Dorsolateral prefrontal cortex (tissue), 120 donors: ENCODE measurements at regions of chr1 and their contacts with region 1.

Region 1: GRCh38 chr1:211133836-211134669 is at the start of gene KCNH1:
- DNase-seq: peak; percentile 86 to 94 (median 91)
- H3K4me3 ChIP-seq: peak within 1 kb of the TSS; percentile 57 to 86 (median 72)
- H3K27ac ChIP-seq: peak within 1 kb of the TSS; percentile 66 to 96 (median 89)
- H3K27me3 ChIP-seq: peaks cover 0 to 3% (median 0%) of the 10 kb centered on the region in 45 donors
- CTCF ChIP-seq: peak; percentile 81 to 100 (median 99)
- total RNA-seq, gene KCNH1: 30.0 to 110 (median 71.5) TPM

Region 2: DNA sequence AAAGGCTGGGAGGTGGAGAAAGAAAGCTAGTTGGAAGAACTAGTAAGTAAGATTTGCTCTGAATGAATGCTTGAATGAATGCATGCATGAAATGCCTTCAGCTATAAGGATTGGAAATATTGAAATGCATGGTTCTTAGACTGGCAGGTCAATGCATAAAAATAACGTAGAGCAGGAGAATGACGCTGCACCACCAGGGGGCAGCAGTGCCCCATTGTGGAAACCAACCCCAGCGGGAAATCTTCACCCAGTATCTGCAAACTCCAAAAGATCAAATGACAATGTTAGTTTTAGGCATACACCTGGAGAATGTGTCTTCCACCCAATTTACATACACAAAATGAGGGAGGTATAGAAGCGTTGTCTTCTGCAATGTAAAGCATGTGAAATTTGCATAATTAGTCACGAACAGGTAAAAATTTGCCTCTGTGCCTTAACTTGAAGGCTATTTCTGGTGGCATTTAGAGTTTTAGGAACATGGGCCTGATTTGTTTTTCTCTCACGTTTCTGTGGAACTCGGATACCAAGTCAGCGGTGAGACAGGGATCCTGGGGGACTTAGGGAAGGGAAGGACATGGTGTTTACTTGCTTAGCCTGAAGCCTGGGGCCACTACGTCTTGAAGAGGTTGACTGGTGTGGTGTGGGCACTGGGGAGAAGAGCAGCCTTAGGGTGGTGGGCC is 726.7 kb before region 1 on chr1:
- intact Hi-C with region 1: loop called (anchors 1 kb)
- DNase-seq: peak; percentile 70 to 90 (median 84)
- H3K4me3 ChIP-seq: no peak overlapping the region
- H3K27ac ChIP-seq: no peak overlapping the region
- H3K27me3 ChIP-seq: no peaks in the 10 kb centered on the region
- CTCF ChIP-seq: peak; percentile 92 to 100 (median 97)

Region 3: GRCh38 chr1:210584439-210585113 is 549.5 kb before region 1 on chr1:
- intact Hi-C with region 1: loop called (anchors 1 kb)
- DNase-seq: peak; percentile 86 to 98 (median 94)
- H3K4me3 ChIP-seq: no peak overlapping the region
- H3K27ac ChIP-seq: peak overlapping the region in 53 of 59 donors; percentile 3 to 86 (median 66)
- H3K27me3 ChIP-seq: no peaks in the 10 kb centered on the region
- CTCF ChIP-seq: peak; percentile 53 to 96 (median 87)

Region 4: DNA sequence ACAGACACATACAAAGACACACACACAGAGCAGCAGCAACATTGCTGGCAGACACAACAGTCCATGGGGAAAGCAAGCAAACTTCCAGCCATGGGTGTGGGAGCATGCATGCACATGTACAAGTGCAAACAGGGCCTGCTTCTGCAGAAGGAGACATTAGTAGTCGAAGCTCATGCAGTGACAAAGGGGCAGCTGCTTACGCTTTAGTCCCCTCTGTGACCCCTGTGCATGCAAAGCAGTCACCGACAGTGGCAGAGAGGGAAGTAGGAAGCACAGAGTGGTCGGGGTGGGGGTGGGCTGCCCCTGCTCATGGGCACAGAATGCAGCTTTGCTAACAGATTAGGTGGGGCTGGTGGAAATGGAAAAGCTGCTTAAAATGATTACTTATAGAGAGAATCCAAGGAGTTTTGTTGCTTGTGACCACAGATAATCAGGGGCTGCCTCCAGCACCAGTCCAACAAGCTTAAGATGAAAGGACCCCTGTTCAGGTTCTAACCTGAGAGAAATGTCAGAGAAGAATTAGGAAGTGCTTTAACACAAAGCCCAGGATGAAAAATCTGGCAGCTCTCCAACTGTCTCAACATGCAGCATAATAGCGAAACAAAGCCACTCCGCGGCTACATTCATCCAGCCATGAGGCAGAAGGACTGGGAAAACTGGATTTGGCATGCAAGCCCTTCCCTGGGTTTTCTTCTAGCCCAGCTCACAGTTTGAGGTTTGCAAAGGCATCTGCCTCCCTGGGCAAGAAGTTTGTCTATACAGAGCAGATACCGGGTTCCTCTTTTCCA is 379.0 kb before region 1 on chr1:
- intact Hi-C with region 1: loop called in 1 of 2 experiments (anchors 10 kb)
- DNase-seq: peak in 3 of 10 donors; percentile 37 to 89 (median 39)
- H3K4me3 ChIP-seq: peak overlapping the region in 10 of 59 donors; percentile 7 to 47 (median 16)
- H3K27ac ChIP-seq: peak overlapping the region in 33 of 59 donors; percentile 1 to 71 (median 40)
- H3K27me3 ChIP-seq: no peaks in the 10 kb centered on the region
- CTCF ChIP-seq: no peak

Region 5: GRCh38 chr1:210792245-210793102 is 341.6 kb before region 1 on chr1:
- intact Hi-C with region 1: no loop called
- DNase-seq: peak in 1 of 10 donors; percentile 26
- H3K4me3 ChIP-seq: no peak overlapping the region
- H3K27ac ChIP-seq: peak overlapping the region in 39 of 59 donors; percentile 4 to 69 (median 36)
- H3K27me3 ChIP-seq: no peaks in the 10 kb centered on the region
- CTCF ChIP-seq: no peak

Region 6: DNA sequence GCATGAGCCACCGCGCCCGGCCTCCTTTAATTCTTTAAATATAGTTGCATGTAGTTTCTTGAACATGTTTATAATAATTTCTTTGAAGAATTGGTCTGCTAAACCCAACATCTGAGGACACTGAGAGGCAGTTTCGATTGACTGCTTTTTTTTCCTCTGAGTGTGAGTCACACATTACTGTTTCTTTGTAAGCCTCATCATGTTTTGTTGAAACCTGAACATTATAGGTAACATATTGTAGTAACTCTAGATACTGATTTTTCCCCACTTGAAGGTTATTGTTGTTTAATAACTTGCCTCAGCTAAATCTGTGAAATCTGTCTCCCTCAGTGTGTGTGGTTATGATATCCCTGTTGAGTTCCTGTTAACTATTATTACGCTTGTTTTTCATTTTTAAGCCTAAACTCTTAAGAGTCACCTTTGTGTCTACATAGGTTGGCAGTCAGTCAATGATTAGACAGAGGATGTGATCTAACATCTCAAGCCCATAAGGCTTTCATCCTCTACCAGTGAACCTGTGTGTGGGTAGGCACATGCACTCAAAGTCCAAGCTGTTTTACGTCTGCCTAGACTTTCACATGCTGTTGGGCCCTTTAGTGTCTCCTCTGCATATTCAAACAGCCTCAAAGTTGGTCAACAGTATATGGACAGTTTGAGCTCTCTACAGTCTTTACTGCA is 155.6 kb before region 1 on chr1:
- intact Hi-C with region 1: no loop called
- DNase-seq: no peak
- H3K4me3 ChIP-seq: no peak overlapping the region
- H3K27ac ChIP-seq: no peak overlapping the region
- H3K27me3 ChIP-seq: no peaks in the 10 kb centered on the region
- CTCF ChIP-seq: no peak

Region 7: DNA sequence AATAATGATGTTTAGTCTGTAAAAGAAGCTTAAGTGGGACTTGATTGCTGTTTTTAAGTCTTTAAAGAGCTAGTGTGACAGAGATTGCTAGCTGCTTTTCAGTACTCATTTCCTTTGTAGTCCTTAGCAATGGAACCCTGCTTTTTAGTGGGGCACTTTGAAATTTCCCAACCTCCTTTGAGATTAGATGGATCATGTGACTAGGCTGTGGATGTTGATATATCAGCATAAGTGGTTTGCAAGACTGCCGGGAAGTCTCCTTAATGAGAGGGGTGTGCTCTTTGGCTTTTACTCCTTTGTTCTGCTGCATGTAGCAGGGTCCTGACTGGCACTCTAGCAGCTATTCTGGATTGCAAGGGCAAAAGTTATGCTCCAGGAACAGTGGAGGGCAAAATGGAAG is 113.9 kb after region 1 on chr1:
- intact Hi-C with region 1: no loop called
- DNase-seq: no peak
- H3K4me3 ChIP-seq: no peak overlapping the region
- H3K27ac ChIP-seq: no peak overlapping the region
- H3K27me3 ChIP-seq: no peaks in the 10 kb centered on the region
- CTCF ChIP-seq: no peak

Region 8: GRCh38 chr1:211258756-211259637 is 124.9 kb after region 1 on chr1 and contains the start of gene RCOR3:
- intact Hi-C with region 1: loop called in 1 of 2 experiments (anchors 5 kb)
- DNase-seq: peak; percentile 81 to 95 (median 90)
- H3K4me3 ChIP-seq: peak within 1 kb of the TSS; percentile 59 to 97 (median 90)
- H3K27ac ChIP-seq: peak within 1 kb of the TSS; percentile 95 to 100 (median 99)
- H3K27me3 ChIP-seq: no peaks in the 10 kb centered on the region
- CTCF ChIP-seq: peak; percentile 39 to 84 (median 58)
- total RNA-seq, gene RCOR3: 67.1 to 150 (median 96.6) TPM